ENCODE measurements at regions of chr3 and their contacts with region 1.

Region 1: GRCh38 chr3:77377717-77378116 is 337.8 kb downstream of the ROBO2 start:
- DNase-seq: no peak
- H3K4me3 ChIP-seq: no peak overlapping the region
- H3K27ac ChIP-seq: no peak overlapping the region
- H3K4me1 ChIP-seq: peaks cover 0 to 2% of the 10 kb centered on the region in 2 donors
- H3K27me3 ChIP-seq: no peaks in the 10 kb centered on the region
- CTCF ChIP-seq: no peak

Region 2: GRCh38 chr3:77014226-77014625 is 363.5 kb before region 1 on chr3:
- intact Hi-C with region 1: no loop called
- DNase-seq: no peak
- H3K4me3 ChIP-seq: no peak overlapping the region
- H3K27ac ChIP-seq: no peak overlapping the region
- H3K4me1 ChIP-seq: no peaks in the 10 kb centered on the region
- H3K27me3 ChIP-seq: no peaks in the 10 kb centered on the region
- CTCF ChIP-seq: no peak

Region 3: DNA sequence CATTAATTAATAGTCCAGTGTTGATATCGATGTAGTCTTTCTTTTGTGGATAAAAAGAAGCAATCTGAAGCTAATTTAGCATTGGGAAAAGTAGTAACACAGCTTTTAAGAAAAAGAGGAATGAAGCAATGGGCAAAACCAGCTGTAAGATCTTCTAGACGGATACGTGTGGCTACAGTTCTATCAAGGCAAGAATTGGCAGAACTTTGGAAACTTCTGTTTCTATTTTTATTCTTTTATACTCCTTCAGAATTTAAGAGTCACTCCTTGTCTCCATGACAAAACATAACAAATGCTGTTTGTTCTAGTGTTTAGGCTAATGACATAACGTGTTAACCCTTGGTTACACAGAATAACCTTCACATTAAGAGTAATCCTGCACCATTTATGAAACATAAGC is 48.6 kb before region 1 on chr3:
- intact Hi-C with region 1: loop called (anchors 5 kb)
- DNase-seq: no peak
- H3K4me3 ChIP-seq: peak overlapping the region in 1 of 2 donors; percentile 36
- H3K27ac ChIP-seq: peak overlapping the region; percentile 68 to 72
- H3K4me1 ChIP-seq: peaks cover 0 to 20% of the 10 kb centered on the region in 2 donors
- H3K27me3 ChIP-seq: no peaks in the 10 kb centered on the region
- CTCF ChIP-seq: no peak